ENCODE measurements at regions of chr7 and their contacts with region 1.

Region 1: GRCh38 chr7:149067876-149068275 is 22.6 kb downstream of the ZNF786 start:
- DNase-seq: no peak
- ATAC-seq: no peak
- H3K4me3 ChIP-seq: no peak overlapping the region
- H3K27ac ChIP-seq: no peak overlapping the region
- H3K4me1 ChIP-seq: no peaks in the 10 kb centered on the region
- H3K27me3 ChIP-seq: no peaks in the 10 kb centered on the region
- CTCF ChIP-seq: no peak

Region 2: GRCh38 chr7:149005241-149006050 is 62.4 kb before region 1 on chr7:
- intact Hi-C with region 1: loop called (anchors 2 to 5 kb)
- DNase-seq: peak; percentile 87 to 93
- ATAC-seq: peak; percentile 85 to 98 (median 94)
- H3K4me3 ChIP-seq: no peak overlapping the region
- H3K27ac ChIP-seq: no peak overlapping the region
- H3K4me1 ChIP-seq: no peaks in the 10 kb centered on the region
- H3K27me3 ChIP-seq: no peaks in the 10 kb centered on the region
- CTCF ChIP-seq: peak; percentile 90

Region 3: GRCh38 chr7:149220539-149220938 is 152.7 kb after region 1 on chr7:
- intact Hi-C with region 1: no loop called
- DNase-seq: no peak
- ATAC-seq: peak in 1 of 4 donors; percentile 35
- H3K4me3 ChIP-seq: no peak overlapping the region
- H3K27ac ChIP-seq: no peak overlapping the region
- H3K4me1 ChIP-seq: no peaks in the 10 kb centered on the region
- H3K27me3 ChIP-seq: no peaks in the 10 kb centered on the region
- CTCF ChIP-seq: no peak

Measured in psoas muscle (tissue), 8 donors.